Gastrocnemius medialis (tissue), 4 donors: ENCODE measurements at regions of chr5 and their contacts with region 1.

Region 1: DNA sequence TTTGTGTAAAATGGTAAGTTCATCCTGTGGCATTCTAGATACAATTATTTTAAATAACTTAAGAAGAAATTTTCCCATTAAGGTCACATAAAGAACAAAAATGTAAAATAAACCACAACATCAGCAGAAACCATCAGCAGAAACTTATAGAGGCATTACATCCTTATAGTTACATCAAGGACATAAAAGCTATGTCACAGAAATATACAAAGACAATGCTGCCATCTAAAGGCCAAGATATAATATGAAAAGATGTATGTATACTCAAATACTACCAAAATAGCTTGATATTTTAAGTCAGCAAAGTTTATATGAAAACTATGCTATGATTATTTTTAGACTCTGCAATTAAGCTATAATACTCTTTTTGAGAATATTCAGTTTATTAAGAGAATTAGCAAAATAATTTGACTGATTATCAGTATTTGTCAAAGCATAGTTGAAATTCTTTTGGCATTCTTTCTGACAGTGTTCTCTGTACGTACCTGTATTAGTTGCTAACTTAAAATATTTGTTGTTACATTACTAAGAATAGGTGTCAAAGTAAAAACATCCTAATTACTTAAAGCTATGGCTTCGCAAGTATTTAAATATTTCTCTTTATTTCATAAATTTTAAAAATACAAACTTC is 36.2 kb downstream of the FBXL17 start:
- DNase-seq: no peak
- ATAC-seq: peak in 1 of 2 donors; percentile 55
- H3K4me3 ChIP-seq: no peak overlapping the region
- H3K27ac ChIP-seq: no peak overlapping the region
- H3K4me1 ChIP-seq: peaks cover 20 to 27% of the 10 kb centered on the region in 2 donors
- H3K27me3 ChIP-seq: no peaks in the 10 kb centered on the region
- CTCF ChIP-seq: peak in 4 of 5 experiments; percentile 31 to 51 (median 42)
- POLR2A ChIP-seq: no peak

Region 2: DNA sequence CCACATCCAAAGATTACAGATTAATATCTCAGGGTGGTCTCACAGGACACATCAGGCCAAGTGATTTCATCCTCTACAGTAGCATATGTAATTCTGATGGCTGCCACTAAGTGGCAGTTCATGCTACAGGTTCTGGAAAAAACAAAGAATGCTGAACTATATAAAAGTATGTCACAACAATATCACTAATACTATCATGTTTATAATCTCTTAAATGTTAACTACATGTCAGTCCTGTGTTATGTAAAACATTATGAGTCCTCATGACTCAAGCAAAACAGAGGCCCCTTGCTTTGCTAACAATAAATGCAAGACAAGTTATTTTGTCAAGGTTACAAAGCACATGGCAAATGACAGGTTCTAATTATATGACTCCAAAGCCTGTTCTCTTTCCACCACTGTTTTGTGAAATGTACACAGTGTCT is 196.9 kb before region 1 on chr5:
- in situ Hi-C with region 1: loop called in 1 of 4 experiments (anchors 25 kb)
- intact Hi-C with region 1: loop called (anchors 10 kb)
- DNase-seq: no peak
- ATAC-seq: peak in 1 of 2 donors; percentile 26
- H3K4me3 ChIP-seq: no peak overlapping the region
- H3K27ac ChIP-seq: no peak overlapping the region
- H3K4me1 ChIP-seq: peaks cover 5 to 6% of the 10 kb centered on the region in 2 donors
- H3K27me3 ChIP-seq: no peaks in the 10 kb centered on the region
- CTCF ChIP-seq: peak in 2 of 5 experiments; percentile 25 to 44
- POLR2A ChIP-seq: no peak

Region 3: DNA sequence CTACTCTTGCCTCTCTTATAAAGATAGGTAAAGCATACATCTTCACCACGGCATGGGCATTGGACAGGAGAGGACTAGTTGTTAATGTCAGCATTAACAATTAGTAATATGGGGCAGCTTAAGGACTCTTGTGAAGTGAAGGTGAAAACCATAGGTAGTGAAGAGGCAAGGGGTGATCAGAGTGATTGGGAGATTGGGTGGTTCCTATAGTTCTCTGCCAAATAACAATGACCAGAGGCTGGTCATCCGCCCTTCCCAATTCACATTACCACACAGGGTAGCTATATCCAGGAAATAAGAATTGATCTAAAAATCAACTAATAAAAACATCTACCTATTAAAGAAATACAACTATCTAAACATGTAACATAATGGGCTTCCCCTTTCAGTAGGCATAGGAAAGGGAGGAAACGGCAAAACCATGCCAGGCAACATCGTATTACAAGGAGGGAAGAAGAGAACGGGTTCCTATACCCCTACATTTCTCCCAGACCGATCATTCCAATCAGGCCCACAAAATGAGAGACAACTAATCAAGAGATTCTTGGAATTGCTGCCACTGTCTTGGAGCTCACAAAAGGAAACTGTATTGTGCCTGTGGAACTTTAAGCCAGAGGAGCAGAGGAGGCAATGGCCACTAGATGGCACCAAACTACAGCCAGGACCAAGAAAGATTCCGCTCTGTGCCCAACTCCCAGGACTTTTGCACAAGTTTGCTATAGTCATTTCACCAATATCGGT is 85.4 kb before region 1 on chr5:
- in situ Hi-C with region 1: loop called in 3 of 4 experiments (anchors 5 kb)
- intact Hi-C with region 1: loop called (anchors 1 kb)
- DNase-seq: peak; percentile 53 to 62
- ATAC-seq: peak; percentile 84 to 97
- H3K4me3 ChIP-seq: peak overlapping the region in 3 of 4 donors; percentile 4 to 41 (median 33)
- H3K27ac ChIP-seq: no peak overlapping the region
- H3K4me1 ChIP-seq: peaks cover 44 to 47% of the 10 kb centered on the region in 2 donors
- H3K27me3 ChIP-seq: no peaks in the 10 kb centered on the region
- CTCF ChIP-seq: peak; percentile 71 to 94 (median 84)
- POLR2A ChIP-seq: no peak